ENCODE measurements at regions of chr21 and their contacts with region 1.

Region 1: DNA sequence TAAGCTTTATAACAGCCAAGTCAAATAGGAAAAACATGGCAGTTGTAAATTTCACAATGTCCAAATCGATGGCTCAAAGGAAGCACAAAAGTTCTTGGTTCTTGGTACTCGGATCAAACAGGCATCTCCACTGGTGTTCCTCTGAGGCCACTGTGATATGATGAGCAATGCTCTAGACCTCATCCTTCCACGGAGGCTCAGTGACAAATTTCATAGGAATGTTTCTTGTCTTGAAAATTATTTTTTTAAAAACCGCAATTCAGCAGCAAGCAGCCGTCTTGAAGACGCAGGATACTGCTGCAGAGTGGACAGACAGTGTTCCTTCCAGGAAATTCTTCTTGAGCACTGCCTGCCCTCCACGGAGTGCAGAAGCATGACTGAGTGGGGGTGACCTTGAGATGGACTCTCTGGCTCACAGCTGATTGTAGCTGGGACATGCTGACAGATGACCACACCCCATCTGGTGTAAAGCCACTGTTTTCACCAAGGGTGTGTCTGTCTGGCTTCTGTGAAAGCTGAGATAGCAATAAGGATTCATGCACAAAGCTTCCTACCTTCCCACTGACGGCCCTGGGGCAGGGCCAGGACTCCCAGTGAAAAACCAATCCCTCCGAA is 61.9 kb downstream of the TIAM1 start:
- DNase-seq: peak; percentile 55
- ATAC-seq: peak; percentile 66
- H3K4me3 ChIP-seq: peak overlapping the region; percentile 6 to 35
- H3K27ac ChIP-seq: peak overlapping the region; percentile 74
- H3K4me1 ChIP-seq: peaks cover 44 to 45% of the 10 kb centered on the region in 2 experiments
- H3K27me3 ChIP-seq: no peaks in the 10 kb centered on the region
- CTCF ChIP-seq: no peak
- POLR2A ChIP-seq: no peak
- RAD21 ChIP-seq: peak; percentile 25; the same call in 1 of the 2 replicates

Region 2: DNA sequence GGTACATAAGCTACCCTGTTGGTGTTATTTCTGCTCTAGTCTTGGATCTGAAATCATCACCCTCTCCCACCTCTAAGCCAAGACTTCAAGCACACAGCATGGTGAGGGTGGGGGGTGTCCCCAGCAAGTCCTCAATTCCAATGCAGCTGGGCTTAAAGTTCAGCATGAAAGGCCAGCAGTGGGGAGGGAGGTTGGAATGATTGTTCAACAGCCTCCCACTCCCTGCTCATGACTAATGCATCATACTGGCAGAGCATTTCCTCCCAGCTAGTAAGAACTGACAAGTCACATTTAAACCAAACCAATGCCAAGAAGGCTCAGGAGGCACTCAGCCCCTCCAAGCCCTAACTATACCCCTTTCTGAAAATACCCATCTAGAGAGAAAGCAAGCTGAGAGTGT is 11.8 kb after region 1 on chr21:
- CTCF ChIA-PET with region 1: no interaction called
- POLR2A ChIA-PET with region 1: interaction called, 13 read pairs
- RAD21 ChIA-PET with region 1: no interaction called
- intact Hi-C with region 1: no loop called
- DNase-seq: peak; percentile 64
- ATAC-seq: peak; percentile 87
- H3K4me3 ChIP-seq: peak overlapping the region in 1 of 2 experiments; percentile 17; a peak in 2 of 4 replicates
- H3K27ac ChIP-seq: peak overlapping the region; percentile 48
- H3K4me1 ChIP-seq: peaks cover 14 to 35% of the 10 kb centered on the region in 2 experiments
- H3K27me3 ChIP-seq: no peaks in the 10 kb centered on the region
- CTCF ChIP-seq: no peak
- POLR2A ChIP-seq: no peak
- RAD21 ChIP-seq: no peak

Region 3: GRCh38 chr21:31316488-31317169 is 34.4 kb after region 1 on chr21:
- CTCF ChIA-PET with region 1: no interaction called
- POLR2A ChIA-PET with region 1: interaction called, 4 read pairs
- RAD21 ChIA-PET with region 1: no interaction called
- intact Hi-C with region 1: loop called (anchors 2 kb)
- DNase-seq: peak; percentile 91
- ATAC-seq: peak; percentile 93
- H3K4me3 ChIP-seq: peak overlapping the region in 1 of 2 experiments; percentile 26; a peak in 2 of 4 replicates
- H3K27ac ChIP-seq: peak overlapping the region; percentile 96
- H3K4me1 ChIP-seq: peaks cover 56 to 76% of the 10 kb centered on the region in 2 experiments
- H3K27me3 ChIP-seq: no peaks in the 10 kb centered on the region
- CTCF ChIP-seq: no peak
- POLR2A ChIP-seq: no peak
- RAD21 ChIP-seq: no peak; the same call in 1 of the 2 replicates